Ovary (tissue), 10 donors: ENCODE measurements at regions of chr4 and their contacts with region 1.

Region 1: DNA sequence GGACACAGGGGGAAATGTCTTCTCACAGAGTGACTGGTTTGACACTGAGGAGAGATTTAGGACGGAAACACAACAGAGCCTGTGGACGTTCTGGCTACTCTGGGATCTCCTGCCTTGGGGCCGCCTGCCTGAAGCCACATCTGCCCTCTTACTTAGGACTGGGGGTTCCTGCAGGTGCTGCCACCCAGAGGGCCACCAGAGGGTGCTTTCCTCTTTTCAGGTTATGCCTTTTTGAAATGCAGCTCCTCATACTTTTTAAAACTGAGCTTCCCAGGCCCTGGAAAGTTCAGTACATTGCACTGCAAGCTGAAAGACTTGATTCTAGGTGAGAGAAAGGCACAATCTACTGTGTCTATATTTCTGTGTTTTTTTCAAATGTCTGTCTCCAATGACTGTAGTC is 92.2 kb upstream of the PGRMC2 start:
- DNase-seq: peak in 1 of 5 donors; percentile 37
- H3K4me3 ChIP-seq: no peak overlapping the region
- H3K27ac ChIP-seq: no peak overlapping the region
- H3K4me1 ChIP-seq: no peaks in the 10 kb centered on the region
- H3K27me3 ChIP-seq: no peaks in the 10 kb centered on the region
- CTCF ChIP-seq: peak in 1 of 3 donors; percentile 10
- EP300 ChIP-seq: no peak
- POLR2A ChIP-seq: no peak

Region 2: GRCh38 chr4:128123036-128123435 is 256.8 kb before region 1 on chr4:
- intact Hi-C with region 1: no loop called
- DNase-seq: no peak
- H3K4me3 ChIP-seq: no peak overlapping the region
- H3K27ac ChIP-seq: no peak overlapping the region
- H3K4me1 ChIP-seq: no peaks in the 10 kb centered on the region
- H3K27me3 ChIP-seq: no peaks in the 10 kb centered on the region
- CTCF ChIP-seq: no peak
- EP300 ChIP-seq: no peak
- POLR2A ChIP-seq: no peak

Region 3: GRCh38 chr4:128287871-128288688 is 91.8 kb before region 1 on chr4:
- intact Hi-C with region 1: loop called in 1 of 4 experiments (anchors 10 kb)
- DNase-seq: peak; percentile 99 to 100 (median 100)
- H3K4me3 ChIP-seq: peak overlapping the region; percentile 94
- H3K27ac ChIP-seq: peak overlapping the region; percentile 70 to 91
- H3K4me1 ChIP-seq: peaks cover 2% of the 10 kb centered on the region
- H3K27me3 ChIP-seq: no peaks in the 10 kb centered on the region
- CTCF ChIP-seq: peak; percentile 43 to 70 (median 69)
- EP300 ChIP-seq: peak; percentile 51
- POLR2A ChIP-seq: peak; percentile 66

Region 4: DNA sequence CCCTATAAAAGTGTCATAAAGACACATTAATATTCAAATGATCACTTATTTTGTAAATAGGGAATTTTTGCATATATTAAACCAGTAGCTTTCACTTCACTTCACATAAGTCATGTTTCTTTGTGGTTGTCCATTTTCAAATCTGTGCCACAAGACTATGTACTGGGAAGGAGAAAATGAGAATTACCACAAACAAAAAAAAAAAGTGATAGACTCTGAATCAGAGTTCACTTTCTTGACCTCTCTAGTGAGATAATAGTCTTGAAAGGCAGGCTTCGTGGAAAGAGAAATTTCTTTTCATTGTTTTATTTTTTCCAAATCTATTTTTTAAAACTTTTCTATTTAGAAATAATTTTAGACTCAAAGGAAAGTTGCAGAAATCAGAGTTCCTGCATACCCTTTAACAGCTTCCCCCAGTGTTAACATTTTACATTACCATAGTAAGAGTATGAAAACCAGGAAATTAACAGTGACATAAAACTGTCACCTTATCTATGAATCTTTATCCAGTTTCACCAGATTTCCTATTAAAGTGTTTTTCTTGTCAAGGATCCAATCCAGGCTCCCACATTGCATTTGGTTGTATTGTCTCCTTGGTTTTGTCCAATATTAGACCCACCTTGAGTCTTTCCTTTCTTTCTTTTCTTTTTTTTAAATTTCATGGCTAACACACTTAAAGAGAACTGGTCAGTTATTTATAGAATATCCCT is 123.1 kb after region 1 on chr4:
- intact Hi-C with region 1: no loop called
- DNase-seq: no peak
- H3K4me3 ChIP-seq: no peak overlapping the region
- H3K27ac ChIP-seq: no peak overlapping the region
- H3K4me1 ChIP-seq: no peaks in the 10 kb centered on the region
- H3K27me3 ChIP-seq: no peaks in the 10 kb centered on the region
- CTCF ChIP-seq: no peak
- EP300 ChIP-seq: no peak
- POLR2A ChIP-seq: no peak